Activated naive CD4-positive, alpha-beta T cell treated with anti-CD3 and anti-CD28 coated beads, Interleukin-2, amount 10 ng/mL, durations not matched to agents 7 days and 5 days (primary cell): ENCODE measurements at regions of chr11 and their contacts with region 1.

Region 1: GRCh38 chr11:3984896-3985295 is 109.7 kb upstream of the RRM1 start:
- DNase-seq: peak; percentile 60
- H3K4me3 Mint-ChIP-seq: no peak overlapping the region
- H3K27ac Mint-ChIP-seq: no peak overlapping the region
- H3K4me1 Mint-ChIP-seq: peaks cover 74% of the 10 kb centered on the region
- H3K27me3 Mint-ChIP-seq: no peaks in the 10 kb centered on the region

Region 2: GRCh38 chr11:3674189-3674588 is 310.7 kb before region 1 on chr11:
- CTCF ChIA-PET with region 1: no interaction called
- DNase-seq: no peak
- H3K4me3 Mint-ChIP-seq: no peak overlapping the region
- H3K27ac Mint-ChIP-seq: no peak overlapping the region
- H3K4me1 Mint-ChIP-seq: no peaks in the 10 kb centered on the region
- H3K27me3 Mint-ChIP-seq: no peaks in the 10 kb centered on the region

Region 3: DNA sequence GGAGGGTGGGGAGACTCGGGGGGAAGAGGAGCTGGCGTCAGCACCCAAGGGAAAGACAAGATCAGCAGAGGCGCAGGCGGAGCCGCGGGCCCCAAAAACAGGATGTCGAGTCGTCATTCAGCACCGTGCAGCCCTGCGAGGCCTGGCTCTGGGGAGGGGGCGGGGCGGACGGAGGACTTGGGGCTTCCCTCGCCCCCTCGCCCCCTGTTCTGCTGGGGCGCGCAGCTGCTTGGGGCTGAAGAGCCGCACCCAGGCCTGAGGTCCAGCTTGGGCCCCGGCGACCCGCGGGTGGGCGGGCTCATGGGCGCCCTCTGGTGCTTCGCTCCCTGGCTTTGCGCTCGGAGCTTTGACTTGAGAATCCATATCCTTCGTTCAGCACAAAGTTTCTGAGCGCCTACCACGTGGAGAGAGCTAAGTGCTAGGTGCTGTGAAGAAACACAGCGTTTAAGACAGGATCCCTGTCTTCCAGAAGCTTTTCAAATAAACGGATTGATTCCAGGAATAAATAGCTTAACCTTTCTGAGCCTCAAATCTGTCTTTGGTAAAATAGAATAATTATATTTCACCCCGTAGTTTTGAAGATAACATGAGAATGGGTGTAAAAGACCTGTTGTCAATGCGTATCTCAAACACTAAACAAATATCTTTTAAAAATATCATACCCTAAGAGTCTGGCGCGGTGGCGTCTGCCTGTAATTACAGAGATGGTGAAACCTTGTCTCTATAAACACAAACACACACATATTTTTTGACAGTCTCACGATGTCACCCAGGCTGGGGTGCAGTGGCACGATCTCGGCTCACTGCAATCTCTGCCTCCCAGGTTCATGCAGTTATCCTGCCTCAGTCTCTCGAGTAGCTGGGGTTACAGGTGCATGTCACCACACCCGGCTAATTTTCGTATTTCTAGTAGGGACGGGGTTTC is 143.2 kb before region 1 on chr11:
- CTCF ChIA-PET with region 1: interaction called, 11 read pairs
- DNase-seq: peak; percentile 95
- H3K4me3 Mint-ChIP-seq: peak overlapping the region; percentile 82
- H3K27ac Mint-ChIP-seq: peak overlapping the region; percentile 99
- H3K4me1 Mint-ChIP-seq: peaks cover 56% of the 10 kb centered on the region
- H3K27me3 Mint-ChIP-seq: no peaks in the 10 kb centered on the region